Activated CD8-positive, alpha-beta T cell treated with anti-CD3 and anti-CD28 coated beads for 36 hours (primary cell): ENCODE measurements at regions of chr3 and their contacts with region 1.

Region 1: DNA sequence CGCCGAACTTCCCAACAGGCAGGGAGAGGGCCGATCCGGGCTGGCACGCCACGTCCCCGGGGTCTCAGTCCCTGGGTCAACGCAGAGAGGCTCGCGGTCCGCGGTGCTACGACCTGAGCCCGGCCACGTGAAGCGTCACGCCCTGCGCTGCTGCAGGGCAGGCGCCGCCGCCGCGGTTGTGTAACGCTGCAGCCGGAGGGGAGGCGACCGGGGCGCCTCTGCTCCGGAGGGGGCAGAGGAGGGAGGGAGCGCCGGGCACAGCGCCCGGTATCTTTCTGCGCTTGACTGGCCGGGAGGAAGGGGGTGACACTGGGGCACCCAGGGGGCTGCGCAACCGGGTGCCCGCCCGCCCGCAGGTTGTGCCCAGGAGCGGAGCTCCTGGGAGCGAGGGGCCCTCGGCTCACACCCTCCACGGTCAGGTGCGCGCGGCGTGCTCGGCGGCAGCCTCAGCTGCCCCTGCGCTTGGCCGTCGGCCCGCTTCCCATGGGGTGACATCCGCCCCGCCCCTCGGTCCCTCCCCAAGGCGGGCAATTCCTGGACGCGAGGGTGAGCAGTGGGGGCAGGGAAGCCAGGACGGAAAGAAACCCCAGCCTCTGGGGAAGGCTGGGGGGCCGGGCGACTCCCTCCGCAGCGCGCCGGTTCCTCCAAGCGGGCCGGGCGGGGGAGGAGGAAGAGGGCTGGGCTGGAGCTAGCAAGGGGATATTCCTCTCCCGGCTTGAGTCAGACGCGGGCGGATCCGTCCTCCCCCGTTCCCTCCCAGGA is 852 bp upstream of the BHLHE40 start:
- DNase-seq: peak; percentile 98
- ATAC-seq: peak; percentile 57
- H3K4me3 Mint-ChIP-seq: peak overlapping the region; percentile 92
- H3K27ac Mint-ChIP-seq: peak overlapping the region; percentile 96
- H3K4me1 Mint-ChIP-seq: peaks cover 34% of the 10 kb centered on the region
- H3K27me3 Mint-ChIP-seq: no peaks in the 10 kb centered on the region
- CTCF ChIP-seq: no peak

Region 2: DNA sequence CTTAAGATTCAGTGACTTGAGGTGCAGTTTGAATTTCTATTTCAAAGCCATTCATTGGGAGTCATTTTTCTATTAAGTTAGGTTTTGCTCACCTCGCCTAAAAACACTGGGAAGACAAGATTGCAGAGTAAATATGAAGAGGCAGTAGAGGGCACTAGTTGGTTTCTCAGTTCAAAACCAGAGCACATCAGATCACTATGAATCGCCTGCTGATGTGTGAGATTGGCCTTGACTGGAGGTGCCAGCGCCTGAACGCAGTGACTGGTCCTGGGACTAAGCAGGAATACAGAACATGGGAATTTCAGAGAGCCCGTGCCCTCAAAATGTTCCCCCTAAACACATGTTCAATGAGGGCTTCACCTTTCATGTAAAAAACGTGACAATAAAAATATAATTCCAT is 256.3 kb before region 1 on chr3:
- CTCF ChIA-PET with region 1: interaction called, 19 read pairs
- POLR2A ChIA-PET with region 1: interaction called, 6 read pairs
- intact Hi-C with region 1: loop called (anchors 2 kb)
- DNase-seq: peak; percentile 36
- ATAC-seq: peak; percentile 80
- H3K4me3 Mint-ChIP-seq: no peak overlapping the region
- H3K27ac Mint-ChIP-seq: peak overlapping the region; percentile 64
- H3K4me1 Mint-ChIP-seq: peaks cover 30% of the 10 kb centered on the region
- H3K27me3 Mint-ChIP-seq: no peaks in the 10 kb centered on the region
- CTCF ChIP-seq: peak; percentile 34

Region 3: GRCh38 chr3:4834403-4834866 is 143.9 kb before region 1 on chr3:
- CTCF ChIA-PET with region 1: interaction called, 135 read pairs
- POLR2A ChIA-PET with region 1: interaction called, 434 read pairs
- intact Hi-C with region 1: no loop called
- DNase-seq: peak; percentile 95
- ATAC-seq: peak; percentile 48
- H3K4me3 Mint-ChIP-seq: peak overlapping the region; percentile 63
- H3K27ac Mint-ChIP-seq: peak overlapping the region; percentile 97
- H3K4me1 Mint-ChIP-seq: peaks cover 86% of the 10 kb centered on the region
- H3K27me3 Mint-ChIP-seq: no peaks in the 10 kb centered on the region
- CTCF ChIP-seq: no peak

Region 4: GRCh38 chr3:4888913-4889846 is 89.2 kb before region 1 on chr3:
- CTCF ChIA-PET with region 1: interaction called, 4 read pairs
- POLR2A ChIA-PET with region 1: interaction called, 12 read pairs
- intact Hi-C with region 1: no loop called
- DNase-seq: peak; percentile 59
- ATAC-seq: peak; percentile 88
- H3K4me3 Mint-ChIP-seq: no peak overlapping the region
- H3K27ac Mint-ChIP-seq: peak overlapping the region; percentile 88
- H3K4me1 Mint-ChIP-seq: peaks cover 40% of the 10 kb centered on the region
- H3K27me3 Mint-ChIP-seq: no peaks in the 10 kb centered on the region
- CTCF ChIP-seq: no peak

Region 5: GRCh38 chr3:5006755-5007202 is 28.4 kb after region 1 on chr3:
- CTCF ChIA-PET with region 1: interaction called, 15 read pairs
- POLR2A ChIA-PET with region 1: interaction called, 81 read pairs
- intact Hi-C with region 1: no loop called
- DNase-seq: peak; percentile 93
- ATAC-seq: peak; percentile 82
- H3K4me3 Mint-ChIP-seq: peak overlapping the region; percentile 37
- H3K27ac Mint-ChIP-seq: peak overlapping the region; percentile 96
- H3K4me1 Mint-ChIP-seq: peaks cover 69% of the 10 kb centered on the region
- H3K27me3 Mint-ChIP-seq: peaks cover 1% of the 10 kb centered on the region
- CTCF ChIP-seq: no peak

Region 6: DNA sequence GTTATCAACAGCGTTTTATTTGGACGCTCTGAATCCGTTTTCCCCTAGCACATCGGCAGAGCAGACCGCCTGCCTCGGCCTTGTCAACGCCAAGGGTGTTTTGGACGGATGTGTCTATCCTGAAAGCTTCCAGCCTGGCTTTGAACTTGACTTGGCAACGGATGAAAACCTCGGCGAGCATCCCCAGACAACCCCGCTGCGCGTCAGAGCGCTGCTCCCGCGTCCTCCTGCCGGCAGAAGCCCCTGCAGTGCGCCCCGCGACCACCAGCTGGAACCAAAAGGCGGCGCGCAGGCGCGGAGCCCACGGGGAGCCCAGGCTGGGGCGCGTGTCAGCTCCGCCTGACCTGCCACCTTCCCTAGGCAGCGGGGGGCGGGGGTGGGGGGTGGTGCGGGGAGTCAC is 117.5 kb after region 1 on chr3:
- CTCF ChIA-PET with region 1: no interaction called
- POLR2A ChIA-PET with region 1: no interaction called
- intact Hi-C with region 1: no loop called
- DNase-seq: peak; percentile 37
- ATAC-seq: peak; percentile 71
- H3K4me3 Mint-ChIP-seq: peak overlapping the region; percentile 46
- H3K27ac Mint-ChIP-seq: no peak overlapping the region
- H3K4me1 Mint-ChIP-seq: peaks cover 3% of the 10 kb centered on the region
- H3K27me3 Mint-ChIP-seq: peaks cover 15% of the 10 kb centered on the region
- CTCF ChIP-seq: no peak

Region 7: GRCh38 chr3:5187156-5187919 is 209.0 kb after region 1 on chr3 and contains the start of gene EDEM1:
- CTCF ChIA-PET with region 1: no interaction called
- POLR2A ChIA-PET with region 1: interaction called, 12 read pairs
- intact Hi-C with region 1: loop called (anchors 5 kb)
- DNase-seq: peak; percentile 93
- ATAC-seq: peak; percentile 86
- H3K4me3 Mint-ChIP-seq: peak within 1 kb of the TSS; percentile 100
- H3K27ac Mint-ChIP-seq: peak within 1 kb of the TSS; percentile 94
- H3K4me1 Mint-ChIP-seq: peaks cover 21% of the 10 kb centered on the region
- H3K27me3 Mint-ChIP-seq: no peaks in the 10 kb centered on the region
- CTCF ChIP-seq: no peak
- total RNA-seq, gene EDEM1: 156 to 159 TPM